ENCODE measurements at regions of chr19 and their contacts with region 1.

Region 1: GRCh38 chr19:18322759-18323460 is at the start of gene LSM4:
- DNase-seq: peak; percentile 99
- H3K4me3 ChIP-seq: peak within 1 kb of the TSS; percentile 63 to 95 (median 82)
- H3K27ac ChIP-seq: peak within 1 kb of the TSS; percentile 51 to 89
- H3K4me1 ChIP-seq: peaks cover 13 to 62% (median 56%) of the 10 kb centered on the region in 4 experiments
- H3K27me3 ChIP-seq: no peaks in the 10 kb centered on the region

Region 2: DNA sequence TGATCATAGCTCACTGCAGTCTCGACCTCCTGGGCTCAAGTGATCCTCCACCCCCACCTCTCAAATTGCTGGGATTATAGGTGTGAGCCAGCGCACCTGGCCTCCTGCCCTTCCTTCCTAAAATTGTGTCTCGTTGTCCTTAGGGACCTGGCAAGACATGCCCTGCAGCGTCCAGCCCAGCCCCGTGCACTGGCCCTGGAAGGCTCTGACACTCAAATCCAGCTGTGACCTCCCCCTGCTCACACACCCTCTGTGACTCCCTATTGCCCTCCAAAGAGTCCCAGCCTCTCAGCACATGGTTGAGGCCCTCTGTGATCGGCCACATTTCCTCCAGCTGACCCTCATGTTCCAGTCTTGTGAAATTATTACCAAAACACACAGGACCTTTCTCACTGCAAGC is 125.0 kb before region 1 on chr19:
- CTCF ChIA-PET with region 1: no interaction called
- POLR2A ChIA-PET with region 1: no interaction called
- DNase-seq: no peak
- H3K4me3 ChIP-seq: no peak overlapping the region
- H3K27ac ChIP-seq: no peak overlapping the region
- H3K4me1 ChIP-seq: peaks cover 9 to 24% (median 21%) of the 10 kb centered on the region in 4 experiments
- H3K27me3 ChIP-seq: no peaks in the 10 kb centered on the region

Region 3: DNA sequence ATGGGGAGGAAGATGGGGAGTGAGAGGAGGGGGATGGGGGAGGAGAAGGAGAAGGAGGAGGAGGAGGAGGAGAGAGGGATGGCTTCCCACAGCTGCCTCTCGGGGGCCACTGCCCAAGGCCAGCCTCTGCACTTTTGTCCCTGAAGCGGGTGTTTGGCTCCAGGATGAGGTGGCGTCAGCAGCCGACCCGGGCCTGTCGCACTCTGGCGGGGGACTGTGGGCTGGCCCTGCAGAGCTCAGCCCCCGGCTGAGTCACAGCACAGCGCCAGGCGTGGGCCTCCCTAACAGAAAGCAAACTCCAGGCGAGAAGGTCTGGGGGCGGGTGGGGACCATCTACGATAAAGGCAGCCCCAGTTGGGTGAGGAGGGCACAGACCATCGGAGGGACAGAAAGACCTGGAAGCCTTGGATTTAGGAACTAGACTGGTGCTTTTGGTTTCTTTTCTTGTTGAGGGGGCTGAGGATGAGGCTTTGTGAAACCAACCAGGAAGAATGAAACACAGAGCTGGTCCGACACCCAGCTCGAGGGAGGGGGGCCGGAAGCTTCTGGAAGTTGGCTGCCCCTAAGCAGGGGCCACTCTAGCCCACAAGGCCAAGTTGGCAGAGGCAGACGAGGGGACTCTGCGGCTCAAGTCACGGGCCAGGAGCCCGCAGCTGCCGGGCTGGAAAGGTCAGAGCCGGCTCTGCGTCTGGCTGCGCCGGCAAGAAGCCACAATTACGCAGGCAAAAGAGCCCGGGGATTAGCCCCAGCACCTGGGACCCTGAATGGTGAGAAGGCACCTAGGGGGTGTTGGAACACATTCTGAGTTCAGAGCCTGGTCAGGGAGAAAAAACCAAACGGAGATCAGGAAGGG is 18.2 kb before region 1 on chr19:
- CTCF ChIA-PET with region 1: interaction called, 40 read pairs
- POLR2A ChIA-PET with region 1: interaction called, 11 read pairs
- DNase-seq: peak; percentile 87 to 93 (median 91)
- H3K4me3 ChIP-seq: peak overlapping the region; percentile 25 to 77 (median 61)
- H3K27ac ChIP-seq: peak overlapping the region; percentile 95 to 97
- H3K4me1 ChIP-seq: peaks cover 0 to 59% (median 43%) of the 10 kb centered on the region in 4 experiments
- H3K27me3 ChIP-seq: no peaks in the 10 kb centered on the region

Measured in common myeloid progenitor, CD34-positive (primary cell).